Mammary epithelial cell (primary cell): ENCODE measurements at regions of chr11 and their contacts with region 1.

Region 1: GRCh38 chr11:35144136-35144741 is 5.3 kb downstream of the CD44 start:
- DNase-seq: peak; percentile 87
- H3K4me3 ChIP-seq: peak overlapping the region; percentile 36 to 98 (median 88)
- H3K27ac ChIP-seq: peak overlapping the region; percentile 95
- H3K4me1 ChIP-seq: peaks cover 52% of the 10 kb centered on the region
- H3K27me3 ChIP-seq: no peaks in the 10 kb centered on the region
- CTCF ChIP-seq: peak in 1 of 2 donors; percentile 9

Region 2: GRCh38 chr11:34997952-34998528 is 146.2 kb before region 1 on chr11:
- CTCF ChIA-PET with region 1: interaction called, 5 read pairs
- dilution Hi-C with region 1: no loop called
- in situ Hi-C with region 1: loop called in 1 of 2 experiments (anchors 5 kb)
- intact Hi-C with region 1: loop called (anchors 1 kb)
- DNase-seq: peak; percentile 43
- H3K4me3 ChIP-seq: no peak overlapping the region
- H3K27ac ChIP-seq: peak overlapping the region; percentile 18
- H3K4me1 ChIP-seq: peaks cover 6% of the 10 kb centered on the region
- H3K27me3 ChIP-seq: no peaks in the 10 kb centered on the region
- CTCF ChIP-seq: peak; percentile 48

Region 3: DNA sequence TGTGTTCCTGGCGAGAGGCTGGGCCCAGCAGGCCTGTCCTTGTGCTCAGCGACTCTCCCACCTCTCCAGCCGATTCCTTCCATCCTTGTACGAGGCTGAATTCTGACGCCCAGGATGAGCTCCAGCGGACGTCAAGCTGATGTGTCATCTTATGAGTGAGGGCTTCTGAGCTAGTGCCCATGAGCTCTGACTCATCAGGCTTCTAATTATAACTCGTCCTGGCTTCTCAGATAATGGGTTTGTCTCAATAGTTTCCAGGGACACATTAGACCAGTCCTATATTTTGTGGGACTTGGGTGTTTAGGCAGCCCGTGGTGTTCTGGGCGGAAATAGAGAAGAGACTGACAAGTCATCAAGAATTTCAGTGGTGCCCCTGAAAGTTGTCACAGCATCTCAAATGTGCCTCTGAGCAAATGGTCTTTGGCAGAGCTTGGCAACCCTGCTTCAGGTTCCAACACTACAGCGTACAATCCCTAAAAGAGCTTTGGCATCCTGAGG is 113.5 kb before region 1 on chr11:
- CTCF ChIA-PET with region 1: interaction called, 5 read pairs
- dilution Hi-C with region 1: loop called (anchors 5 kb)
- in situ Hi-C with region 1: no loop called
- intact Hi-C with region 1: loop called (anchors 1 kb)
- DNase-seq: peak; percentile 97
- H3K4me3 ChIP-seq: peak overlapping the region in 1 of 3 experiments; percentile 4
- H3K27ac ChIP-seq: peak overlapping the region; percentile 97
- H3K4me1 ChIP-seq: peaks cover 45% of the 10 kb centered on the region
- H3K27me3 ChIP-seq: no peaks in the 10 kb centered on the region
- CTCF ChIP-seq: no peak

Region 4: DNA sequence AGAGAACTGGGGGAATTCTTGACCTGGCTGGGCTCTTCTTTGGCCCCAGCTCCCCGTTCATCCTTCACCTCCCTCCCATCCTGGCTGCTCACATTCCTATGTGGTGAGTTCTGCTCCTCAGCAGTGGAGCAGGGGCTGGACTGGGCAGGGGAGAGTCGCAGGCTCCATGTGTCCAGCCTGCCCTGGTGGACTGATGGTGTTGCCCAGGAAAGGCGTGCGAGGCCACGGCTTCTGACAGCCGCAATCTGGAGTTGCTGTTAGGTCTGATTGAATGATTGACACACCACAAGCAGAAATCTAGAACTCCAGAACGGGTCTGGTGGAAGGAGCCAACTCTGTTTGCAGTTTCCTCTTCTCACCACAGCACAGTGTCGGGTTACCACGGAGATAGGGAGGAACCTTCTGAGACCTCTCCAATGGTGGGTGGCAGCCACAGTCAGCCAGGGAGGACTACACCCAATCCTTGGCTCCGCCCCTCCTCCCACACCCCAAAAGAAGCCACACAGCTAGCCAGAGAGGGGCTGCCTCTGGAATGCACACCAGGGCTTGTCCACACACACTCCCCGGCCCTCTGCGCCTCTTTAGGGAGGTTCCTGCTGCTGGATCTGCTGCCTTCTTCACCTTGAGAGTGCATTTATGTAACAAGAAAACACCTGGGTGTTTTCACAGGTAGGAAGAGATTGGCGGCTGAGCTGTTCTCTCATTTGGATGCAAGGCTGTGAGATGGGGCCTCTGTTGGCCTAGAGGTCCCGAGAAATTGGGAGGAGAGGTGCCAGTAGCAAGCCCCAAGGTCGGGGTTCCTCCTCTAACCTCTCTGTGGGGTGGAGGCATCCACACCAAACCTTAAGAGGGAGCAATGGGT is 61.7 kb before region 1 on chr11:
- CTCF ChIA-PET with region 1: no interaction called
- dilution Hi-C with region 1: loop called (anchors 5 kb)
- in situ Hi-C with region 1: no loop called
- intact Hi-C with region 1: loop called (anchors 2 kb)
- DNase-seq: peak; percentile 86
- H3K4me3 ChIP-seq: peak overlapping the region in 1 of 3 experiments; percentile 11
- H3K27ac ChIP-seq: peak overlapping the region; percentile 96
- H3K4me1 ChIP-seq: peaks cover 60% of the 10 kb centered on the region
- H3K27me3 ChIP-seq: no peaks in the 10 kb centered on the region
- CTCF ChIP-seq: peak in 1 of 2 donors; percentile 2

Region 5: GRCh38 chr11:35305670-35306382 is 161.6 kb after region 1 on chr11:
- CTCF ChIA-PET with region 1: no interaction called
- dilution Hi-C with region 1: no loop called
- in situ Hi-C with region 1: no loop called
- intact Hi-C with region 1: loop called (anchors 5 kb)
- DNase-seq: no peak
- H3K4me3 ChIP-seq: no peak overlapping the region
- H3K27ac ChIP-seq: no peak overlapping the region
- H3K4me1 ChIP-seq: no peaks in the 10 kb centered on the region
- H3K27me3 ChIP-seq: no peaks in the 10 kb centered on the region
- CTCF ChIP-seq: peak; percentile 25 to 67

Region 6: GRCh38 chr11:35337136-35337918 is 193.1 kb after region 1 on chr11:
- CTCF ChIA-PET with region 1: no interaction called
- dilution Hi-C with region 1: no loop called
- in situ Hi-C with region 1: no loop called
- intact Hi-C with region 1: no loop called
- DNase-seq: peak; percentile 99
- H3K4me3 ChIP-seq: no peak overlapping the region
- H3K27ac ChIP-seq: peak overlapping the region; percentile 88
- H3K4me1 ChIP-seq: peaks cover 28% of the 10 kb centered on the region
- H3K27me3 ChIP-seq: no peaks in the 10 kb centered on the region
- CTCF ChIP-seq: no peak